ENCODE measurements at regions of chr20 and their contacts with region 1.

Region 1: GRCh38 chr20:4089756-4090487 is 74.6 kb upstream of the RNF24 start:
- DNase-seq: peak in 1 of 9 experiments; percentile 6
- ATAC-seq: no peak
- H3K4me3 ChIP-seq: no peak overlapping the region
- H3K4me3 Mint-ChIP-seq: no peak overlapping the region
- H3K27ac ChIP-seq: no peak overlapping the region
- H3K27ac Mint-ChIP-seq: no peak overlapping the region
- H3K4me1 ChIP-seq: peaks cover 8% of the 10 kb centered on the region
- H3K4me1 Mint-ChIP-seq: peaks cover 8% of the 10 kb centered on the region
- H3K27me3 ChIP-seq: no peaks in the 10 kb centered on the region
- H3K27me3 Mint-ChIP-seq: peaks cover 6% of the 10 kb centered on the region
- CTCF ChIP-seq: no peak

Region 2: DNA sequence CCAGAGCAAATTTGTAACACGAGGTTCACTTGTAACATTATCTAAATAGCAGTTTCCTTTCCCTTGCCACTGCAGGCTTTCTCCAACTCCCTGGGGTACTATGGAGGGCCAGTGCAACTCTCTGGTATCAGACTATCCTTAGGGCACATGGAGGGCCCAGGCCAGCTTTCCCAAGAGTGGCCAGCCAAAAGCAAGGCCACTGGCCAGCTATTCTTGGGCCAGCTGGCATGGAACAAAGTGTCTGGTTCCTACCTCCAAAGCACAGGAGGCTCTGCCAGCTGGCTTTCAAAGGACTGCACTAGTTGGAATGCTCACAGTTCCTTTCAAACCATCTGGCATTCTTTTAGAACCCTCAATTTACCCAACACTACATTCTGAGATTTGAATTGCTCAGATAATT is 83.3 kb before region 1 on chr20:
- CTCF ChIA-PET with region 1: interaction called, 18 read pairs
- POLR2A ChIA-PET with region 1: no interaction called
- intact Hi-C with region 1: no loop called
- DNase-seq: no peak
- ATAC-seq: no peak
- H3K4me3 ChIP-seq: no peak overlapping the region
- H3K4me3 Mint-ChIP-seq: no peak overlapping the region
- H3K27ac ChIP-seq: no peak overlapping the region
- H3K27ac Mint-ChIP-seq: no peak overlapping the region
- H3K4me1 ChIP-seq: no peaks in the 10 kb centered on the region
- H3K4me1 Mint-ChIP-seq: peaks cover 26% of the 10 kb centered on the region
- H3K27me3 ChIP-seq: no peaks in the 10 kb centered on the region
- H3K27me3 Mint-ChIP-seq: no peaks in the 10 kb centered on the region
- CTCF ChIP-seq: no peak

Region 3: GRCh38 chr20:4064144-4064909 is 25.6 kb before region 1 on chr20:
- CTCF ChIA-PET with region 1: interaction called, 22 read pairs
- POLR2A ChIA-PET with region 1: no interaction called
- intact Hi-C with region 1: no loop called
- DNase-seq: no peak
- ATAC-seq: no peak
- H3K4me3 ChIP-seq: no peak overlapping the region
- H3K4me3 Mint-ChIP-seq: no peak overlapping the region
- H3K27ac ChIP-seq: no peak overlapping the region
- H3K27ac Mint-ChIP-seq: no peak overlapping the region
- H3K4me1 ChIP-seq: no peaks in the 10 kb centered on the region
- H3K4me1 Mint-ChIP-seq: peaks cover 13% of the 10 kb centered on the region
- H3K27me3 ChIP-seq: no peaks in the 10 kb centered on the region
- H3K27me3 Mint-ChIP-seq: no peaks in the 10 kb centered on the region
- CTCF ChIP-seq: no peak

Region 4: GRCh38 chr20:4171538-4172116 is 81.7 kb after region 1 on chr20:
- CTCF ChIA-PET with region 1: no interaction called
- POLR2A ChIA-PET with region 1: no interaction called
- intact Hi-C with region 1: no loop called
- DNase-seq: peak in 1 of 9 experiments; percentile 30
- ATAC-seq: no peak
- H3K4me3 ChIP-seq: peak overlapping the region; percentile 54 to 76
- H3K4me3 Mint-ChIP-seq: peak overlapping the region; percentile 84
- H3K27ac ChIP-seq: peak overlapping the region in 1 of 2 experiments; percentile 16
- H3K27ac Mint-ChIP-seq: peak overlapping the region; percentile 90
- H3K4me1 ChIP-seq: peaks cover 27% of the 10 kb centered on the region
- H3K4me1 Mint-ChIP-seq: peaks cover 37% of the 10 kb centered on the region
- H3K27me3 ChIP-seq: no peaks in the 10 kb centered on the region
- H3K27me3 Mint-ChIP-seq: no peaks in the 10 kb centered on the region
- CTCF ChIP-seq: no peak

Region 5: GRCh38 chr20:4299773-4300172 is 209.9 kb after region 1 on chr20:
- CTCF ChIA-PET with region 1: no interaction called
- POLR2A ChIA-PET with region 1: no interaction called
- intact Hi-C with region 1: no loop called
- DNase-seq: no peak
- ATAC-seq: no peak
- H3K4me3 ChIP-seq: no peak overlapping the region
- H3K4me3 Mint-ChIP-seq: no peak overlapping the region
- H3K27ac ChIP-seq: no peak overlapping the region
- H3K27ac Mint-ChIP-seq: no peak overlapping the region
- H3K4me1 ChIP-seq: no peaks in the 10 kb centered on the region
- H3K4me1 Mint-ChIP-seq: no peaks in the 10 kb centered on the region
- H3K27me3 ChIP-seq: no peaks in the 10 kb centered on the region
- H3K27me3 Mint-ChIP-seq: peaks cover 34% of the 10 kb centered on the region
- CTCF ChIP-seq: no peak

Measured in CD8-positive, alpha-beta T cell (primary cell).